Right ventricle myocardium inferior (tissue), 1 donor: ENCODE measurements at regions of chr3 and their contacts with region 1.

Region 1: GRCh38 chr3:188052169-188053030 is 101.6 kb upstream of the LPP start:
- DNase-seq: peak; percentile 90
- ATAC-seq: peak; percentile 98

Region 2: DNA sequence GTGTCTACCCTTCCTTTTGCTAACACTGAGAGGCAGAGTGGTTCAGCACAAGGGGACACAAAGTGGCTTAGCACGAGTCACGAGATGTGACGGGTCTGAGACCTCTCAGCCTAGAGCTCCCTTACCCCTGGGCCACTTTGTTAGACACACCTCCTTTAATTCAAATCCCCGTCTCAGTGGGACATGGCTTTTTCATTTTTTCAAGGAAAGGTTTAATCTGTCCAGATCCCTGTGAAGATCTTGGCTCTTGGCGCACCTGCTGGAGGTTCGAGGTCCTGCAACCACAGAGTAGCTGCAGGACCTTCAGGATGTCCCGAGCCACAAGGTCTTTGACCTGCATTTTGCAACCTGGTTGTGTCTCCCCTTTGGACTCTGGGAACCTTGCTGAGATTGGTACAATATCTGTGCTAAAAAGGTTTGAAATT is 153.6 kb after region 1 on chr3:
- intact Hi-C with region 1: loop called (anchors 10 kb)
- DNase-seq: no peak
- ATAC-seq: no peak

Region 3: GRCh38 chr3:188348435-188349244 is 296.2 kb after region 1 on chr3:
- intact Hi-C with region 1: loop called (anchors 2 kb)
- DNase-seq: peak; percentile 90
- ATAC-seq: peak; percentile 87

Region 4: DNA sequence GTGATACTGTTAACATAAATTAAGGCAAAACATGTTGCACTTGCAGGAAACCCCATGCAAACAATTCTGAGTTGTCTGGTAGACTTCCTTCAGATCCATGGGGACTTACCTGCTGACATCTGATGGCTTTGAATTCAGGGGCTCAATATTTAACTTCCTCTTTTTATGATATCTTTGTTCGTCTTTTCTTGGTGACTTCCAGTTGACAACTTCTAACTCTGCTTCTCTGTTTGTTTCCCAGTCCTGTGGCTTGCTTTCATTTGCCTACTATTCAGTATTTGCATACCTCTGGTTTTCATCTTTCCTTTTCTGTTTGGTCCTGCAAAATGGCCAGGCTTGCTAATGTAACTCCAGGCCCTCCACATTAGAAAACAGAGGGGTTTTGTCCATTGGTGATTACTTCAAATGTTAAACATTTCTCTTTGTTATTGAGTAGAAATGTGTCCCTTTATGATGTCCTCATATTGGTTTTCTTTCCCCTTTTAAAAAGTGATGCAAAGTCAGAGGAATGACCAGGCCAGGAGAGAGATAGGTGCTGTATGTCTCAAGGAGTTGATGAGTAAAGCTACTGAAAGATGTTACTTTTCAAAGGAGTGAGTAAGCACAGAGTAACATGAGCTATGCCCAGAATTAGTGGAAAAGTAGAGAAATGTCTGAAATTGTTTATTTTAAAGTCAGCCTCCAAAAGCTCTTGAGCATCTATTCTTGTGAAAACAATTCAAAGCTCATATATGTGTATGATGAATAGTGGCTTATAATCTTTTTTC is 437.4 kb after region 1 on chr3:
- intact Hi-C with region 1: loop called (anchors 10 kb)
- DNase-seq: no peak
- ATAC-seq: no peak